Sciatic nerve (tissue), 2 donors: ENCODE measurements at regions of chr1 and their contacts with region 1.

Region 1: DNA sequence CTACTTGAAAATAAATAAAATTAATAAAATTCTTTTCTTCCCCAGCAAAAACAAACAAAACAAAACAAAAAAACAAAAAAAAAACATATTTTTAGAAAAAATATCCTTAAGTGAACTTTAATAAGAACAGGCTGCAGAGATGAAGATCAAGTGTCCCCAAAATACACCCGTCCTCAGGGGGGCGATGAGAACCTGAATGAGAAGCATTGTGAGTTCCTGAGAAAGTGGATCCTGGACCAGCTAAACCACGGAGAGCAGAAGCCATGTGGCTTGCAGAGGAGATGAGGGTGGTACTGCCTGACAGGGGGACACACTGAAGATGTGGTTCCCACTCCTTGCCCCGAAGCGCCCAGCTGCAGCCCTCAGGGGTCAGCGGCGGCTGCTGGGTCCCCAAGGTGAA is 89.3 kb downstream of the ITPKB start:
- DNase-seq: no peak
- ATAC-seq: peak; percentile 54

Region 2: DNA sequence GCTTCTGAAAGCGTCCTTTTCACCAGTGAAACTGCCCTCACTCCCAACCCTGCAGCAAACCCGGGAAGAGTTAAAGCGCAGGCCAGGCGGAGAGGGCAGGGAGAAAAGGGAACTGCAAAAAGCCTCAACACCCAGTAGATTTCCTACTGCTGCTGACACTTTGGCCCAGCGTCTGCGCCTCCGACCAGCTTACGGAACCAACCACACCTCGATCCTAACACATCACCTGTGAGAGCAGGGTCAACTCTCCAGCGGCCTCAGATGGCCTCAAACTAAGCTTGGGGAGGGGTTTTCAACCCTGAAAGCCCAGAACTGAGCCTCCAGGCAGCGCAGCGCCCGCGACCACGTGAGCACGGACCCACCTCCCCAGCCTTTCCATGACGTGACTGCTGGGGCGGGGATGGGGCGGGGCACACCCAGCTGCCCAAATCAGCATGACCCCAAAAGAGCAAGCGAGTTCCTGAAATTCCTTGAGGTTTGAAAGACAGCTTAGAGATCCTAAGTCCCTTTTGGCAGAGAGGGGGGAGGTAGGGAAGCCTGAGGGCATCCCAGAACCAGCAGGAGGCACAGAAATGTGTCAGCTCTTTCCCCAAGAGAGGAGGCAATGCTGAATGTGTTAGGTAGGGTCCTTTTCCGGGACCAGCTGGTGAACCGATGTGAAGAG is 30.2 kb after region 1 on chr1:
- intact Hi-C with region 1: no loop called
- DNase-seq: peak; percentile 95
- ATAC-seq: peak; percentile 90

Region 3: DNA sequence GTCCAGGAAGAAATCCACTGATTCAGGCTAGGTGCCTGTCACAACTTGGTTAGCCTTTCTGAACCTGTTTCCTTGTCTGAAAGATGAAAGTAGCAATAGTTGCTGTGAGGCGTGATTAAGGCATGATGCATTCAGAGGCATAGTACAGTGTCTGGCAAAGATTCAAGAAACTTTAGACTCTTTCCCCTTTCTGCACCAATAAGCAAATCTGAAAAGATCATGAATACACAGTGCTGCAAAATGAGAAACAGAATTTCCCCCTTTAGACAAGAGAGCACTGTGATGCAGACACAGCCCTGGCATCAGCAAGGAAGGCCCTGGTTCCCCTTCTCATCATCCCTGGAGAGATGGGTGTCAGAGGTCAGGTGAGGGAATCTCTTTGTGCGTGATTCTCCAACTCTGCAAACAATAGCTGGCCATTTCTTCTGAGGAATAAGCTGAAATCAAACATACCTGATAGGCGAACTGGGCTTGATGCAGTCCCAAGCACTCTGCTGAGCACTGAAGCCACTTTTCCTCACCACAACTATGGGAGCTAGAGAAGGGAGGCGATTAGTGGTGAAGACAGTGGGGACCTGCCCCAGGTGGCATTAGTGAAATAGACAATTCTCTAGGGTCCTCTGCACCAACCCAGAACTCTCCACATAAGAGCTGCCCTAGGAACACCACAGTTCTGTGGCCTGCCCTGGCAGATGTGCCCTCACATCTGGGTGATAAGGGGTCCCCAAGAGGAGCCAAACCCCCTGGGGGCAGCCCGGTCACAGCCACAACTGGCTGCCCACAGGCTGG is 47.6 kb after region 1 on chr1:
- intact Hi-C with region 1: no loop called
- DNase-seq: no peak
- ATAC-seq: peak; percentile 65

Region 4: GRCh38 chr1:226736908-226737818 is 87.4 kb after region 1 on chr1:
- intact Hi-C with region 1: loop called (anchors 5 kb)
- DNase-seq: peak; percentile 71
- ATAC-seq: peak; percentile 14